GM12878 (cell line): ENCODE measurements at regions of chr12 and their contacts with region 1.

Region 1: DNA sequence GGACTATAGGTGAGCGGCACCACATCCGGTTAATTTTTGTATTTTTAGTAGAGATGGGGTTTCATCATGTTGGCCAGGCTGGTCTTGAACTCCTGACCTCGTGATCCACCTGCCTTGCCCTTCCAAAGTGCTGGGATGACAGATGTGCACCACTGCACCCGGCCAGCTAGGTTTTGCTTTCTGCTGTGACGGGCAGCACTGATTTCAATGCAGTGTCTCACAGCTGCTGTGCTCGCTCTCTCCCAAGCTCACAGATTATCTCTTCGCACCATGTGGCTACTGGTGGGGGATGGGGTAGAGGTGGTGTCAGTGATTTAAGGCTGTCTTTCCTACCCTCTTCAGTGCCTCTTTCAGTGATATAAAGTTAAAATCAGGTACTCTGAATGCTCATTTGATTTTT is 909.1 kb downstream of the TRHDE start:
- DNase-seq: no peak
- ATAC-seq: no peak
- H3K4me3 ChIP-seq: no peak overlapping the region
- H3K27ac ChIP-seq: no peak overlapping the region
- H3K4me1 ChIP-seq: no peaks in the 10 kb centered on the region
- H3K27me3 ChIP-seq: no peaks in the 10 kb centered on the region
- CTCF ChIP-seq: no peak
- EP300 ChIP-seq: no peak
- POLR2A ChIP-seq: no peak
- RAD21 ChIP-seq: no peak

Region 2: DNA sequence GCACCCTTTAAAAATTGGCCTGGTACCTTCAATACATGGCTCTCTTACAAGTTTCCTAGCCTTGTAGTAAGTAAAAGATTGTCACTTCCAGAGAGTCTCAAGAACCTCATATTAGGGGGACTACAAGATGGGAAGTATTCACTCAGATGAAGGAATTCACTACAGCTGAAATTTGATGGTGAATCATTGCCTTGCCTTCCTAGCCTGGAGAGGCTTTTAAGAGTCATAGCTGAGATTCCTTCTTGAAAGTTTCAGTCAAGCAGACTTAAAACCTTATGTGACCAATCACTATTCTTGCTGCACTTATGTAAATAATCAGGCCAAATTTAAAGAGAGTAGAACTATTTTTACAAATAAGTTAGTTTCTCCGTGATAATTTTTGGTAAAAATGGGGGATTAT is 457.5 kb before region 1 on chr12:
- CTCF ChIA-PET with region 1: no interaction called
- POLR2A ChIA-PET with region 1: no interaction called
- RAD21 ChIA-PET with region 1: no interaction called
- SMC1A ChIA-PET with region 1: no interaction called
- in situ Hi-C with region 1: no loop called
- intact Hi-C with region 1: no loop called
- DNase-seq: no peak
- ATAC-seq: no peak
- H3K4me3 ChIP-seq: no peak overlapping the region
- H3K27ac ChIP-seq: no peak overlapping the region
- H3K4me1 ChIP-seq: no peaks in the 10 kb centered on the region
- H3K27me3 ChIP-seq: no peaks in the 10 kb centered on the region
- CTCF ChIP-seq: no peak
- EP300 ChIP-seq: no peak
- POLR2A ChIP-seq: no peak
- RAD21 ChIP-seq: no peak

Region 3: DNA sequence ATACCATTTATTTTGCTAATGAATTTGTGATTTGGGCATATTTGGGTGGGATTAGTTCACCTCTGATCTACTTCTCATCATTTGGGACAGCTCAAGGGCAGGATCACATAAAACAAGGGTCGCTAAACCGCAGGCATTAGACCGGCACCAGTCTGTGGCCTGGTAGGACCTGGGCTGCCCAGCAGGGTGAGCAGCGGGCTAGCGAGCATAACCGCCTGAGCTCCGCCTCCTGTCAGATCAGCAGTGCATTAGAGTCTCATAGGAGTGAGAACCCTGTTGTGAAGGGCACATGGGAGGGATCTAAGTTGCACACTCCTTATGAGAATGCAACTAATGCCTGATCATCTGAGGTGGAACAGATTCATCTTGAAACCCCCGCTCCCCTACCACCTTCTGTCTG is 123.8 kb before region 1 on chr12:
- CTCF ChIA-PET with region 1: no interaction called
- POLR2A ChIA-PET with region 1: no interaction called
- RAD21 ChIA-PET with region 1: no interaction called
- SMC1A ChIA-PET with region 1: no interaction called
- in situ Hi-C with region 1: no loop called
- intact Hi-C with region 1: no loop called
- DNase-seq: no peak
- ATAC-seq: no peak
- H3K4me3 ChIP-seq: no peak overlapping the region
- H3K27ac ChIP-seq: no peak overlapping the region
- H3K4me1 ChIP-seq: no peaks in the 10 kb centered on the region
- H3K27me3 ChIP-seq: no peaks in the 10 kb centered on the region
- CTCF ChIP-seq: no peak
- EP300 ChIP-seq: no peak
- POLR2A ChIP-seq: no peak
- RAD21 ChIP-seq: no peak

Region 4: GRCh38 chr12:73110816-73111215 is 70.4 kb before region 1 on chr12:
- CTCF ChIA-PET with region 1: no interaction called
- POLR2A ChIA-PET with region 1: no interaction called
- RAD21 ChIA-PET with region 1: no interaction called
- SMC1A ChIA-PET with region 1: no interaction called
- in situ Hi-C with region 1: no loop called
- intact Hi-C with region 1: no loop called
- DNase-seq: no peak
- ATAC-seq: no peak
- H3K4me3 ChIP-seq: no peak overlapping the region
- H3K27ac ChIP-seq: no peak overlapping the region
- H3K4me1 ChIP-seq: no peaks in the 10 kb centered on the region
- H3K27me3 ChIP-seq: no peaks in the 10 kb centered on the region
- CTCF ChIP-seq: no peak
- EP300 ChIP-seq: no peak
- POLR2A ChIP-seq: no peak
- RAD21 ChIP-seq: no peak

Region 5: GRCh38 chr12:73277971-73278370 is 96.7 kb after region 1 on chr12:
- CTCF ChIA-PET with region 1: no interaction called
- POLR2A ChIA-PET with region 1: no interaction called
- RAD21 ChIA-PET with region 1: no interaction called
- SMC1A ChIA-PET with region 1: no interaction called
- in situ Hi-C with region 1: loop called (anchors 25 kb)
- intact Hi-C with region 1: no loop called
- DNase-seq: no peak
- ATAC-seq: no peak
- H3K4me3 ChIP-seq: no peak overlapping the region
- H3K27ac ChIP-seq: no peak overlapping the region
- H3K4me1 ChIP-seq: no peaks in the 10 kb centered on the region
- H3K27me3 ChIP-seq: no peaks in the 10 kb centered on the region
- CTCF ChIP-seq: no peak
- EP300 ChIP-seq: no peak
- POLR2A ChIP-seq: no peak
- RAD21 ChIP-seq: no peak